Endothelial cell of umbilical vein (primary cell): ENCODE measurements at regions of chr7 and their contacts with region 1.

Region 1: GRCh38 chr7:92833024-92833765 is 3.2 kb downstream of the CDK6 start:
- DNase-seq: peak; percentile 78
- H3K4me3 ChIP-seq: peak overlapping the region; percentile 68 to 80 (median 71)
- H3K27ac ChIP-seq: peak overlapping the region; percentile 78
- H3K4me1 ChIP-seq: peaks cover 35% of the 10 kb centered on the region
- H3K27me3 ChIP-seq: peaks cover 0 to 12% of the 10 kb centered on the region in 2 experiments
- CTCF ChIP-seq: peak; percentile 79 to 92
- POLR2A ChIP-seq: no peak

Region 2: DNA sequence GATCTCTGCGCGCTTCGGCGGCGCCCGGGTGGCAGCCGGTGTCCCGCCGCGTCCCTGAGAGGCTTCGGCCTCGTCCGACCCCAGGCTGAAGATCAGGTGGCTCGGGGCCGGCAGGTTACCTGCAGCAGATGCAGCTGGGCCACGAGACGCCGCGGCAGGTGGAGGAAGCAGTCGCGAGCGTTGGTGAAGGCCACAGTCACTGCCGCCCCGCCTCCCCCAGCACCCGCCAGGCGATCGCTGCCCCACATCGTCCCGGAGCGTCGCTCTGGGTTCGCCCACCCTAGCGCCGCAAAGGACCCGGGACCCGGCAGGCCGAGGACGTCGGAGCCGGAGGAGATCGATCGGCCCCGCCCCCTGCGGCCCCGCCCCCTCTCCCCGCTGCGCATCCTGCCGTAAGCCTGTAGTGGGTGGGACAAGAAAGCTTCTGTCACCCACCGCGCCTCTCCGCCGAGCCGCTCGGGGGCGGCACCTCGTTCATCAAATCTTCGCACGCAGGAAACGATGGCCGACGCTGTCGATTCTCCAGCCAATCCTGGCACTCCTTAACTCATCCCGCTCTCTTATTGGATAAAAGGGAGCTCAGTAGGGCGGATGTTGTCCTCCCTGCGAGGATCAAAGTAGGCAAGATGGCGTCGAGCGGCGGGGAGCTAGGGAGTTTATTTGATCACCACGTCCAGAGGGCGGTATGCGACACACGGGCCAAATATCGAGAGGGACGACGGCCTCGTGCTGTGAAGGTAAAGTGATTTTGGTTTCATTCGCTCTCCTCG is 304.8 kb before region 1 on chr7 and contains the starts of genes PEX1 and RBM48:
- CTCF ChIA-PET with region 1: interaction called, 5 read pairs
- POLR2A ChIA-PET with region 1: no interaction called
- dilution Hi-C with region 1: no loop called
- intact Hi-C with region 1: loop called (anchors 2 kb)
- DNase-seq: peak; percentile 100
- H3K4me3 ChIP-seq: peak within 1 kb of the TSS; percentile 88 to 100 (median 95)
- H3K27ac ChIP-seq: peak within 1 kb of the TSS; percentile 91
- H3K4me1 ChIP-seq: peaks cover 15% of the 10 kb centered on the region
- H3K27me3 ChIP-seq: no peaks in the 10 kb centered on the region
- CTCF ChIP-seq: peak; percentile 34 to 50
- POLR2A ChIP-seq: peak; percentile 70
- total RNA-seq, gene PEX1: 10.7 and 11.7 TPM in 2 replicates
- total RNA-seq, gene RBM48: 12.0 and 13.1 TPM in 2 replicates

Region 3: DNA sequence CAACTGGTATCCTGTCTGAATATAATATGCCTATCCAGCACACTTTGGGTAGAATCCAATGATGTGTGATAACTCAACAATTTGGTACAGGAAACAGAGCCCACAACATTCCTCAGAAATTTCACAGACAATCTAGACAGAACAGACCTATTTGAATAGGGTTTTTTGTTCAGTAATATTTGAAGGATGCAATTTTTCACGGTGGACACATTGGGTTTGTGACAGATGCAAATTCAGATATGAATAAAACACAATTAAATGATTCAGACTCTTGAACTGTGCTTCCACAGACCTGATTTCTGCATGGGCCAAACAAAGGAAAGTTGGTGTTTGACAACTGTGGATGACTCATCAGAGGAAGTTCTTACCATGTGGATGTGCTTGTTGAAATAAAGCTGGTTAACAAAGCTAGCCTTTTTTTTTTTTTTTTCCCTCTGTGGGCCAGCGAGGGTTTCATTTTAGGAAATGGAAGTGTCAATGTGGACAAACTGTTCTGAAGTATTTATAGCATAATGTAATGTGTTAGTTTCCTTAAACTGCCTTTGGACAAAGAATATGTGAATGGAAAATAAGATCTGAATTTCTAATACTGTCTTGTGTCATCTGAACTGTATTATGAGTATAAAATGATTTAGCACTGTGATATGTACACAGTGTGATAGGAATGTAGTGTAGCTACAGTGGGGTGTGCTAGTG is 199.8 kb before region 1 on chr7:
- CTCF ChIA-PET with region 1: interaction called, 19 read pairs
- POLR2A ChIA-PET with region 1: interaction called, 6 read pairs
- dilution Hi-C with region 1: no loop called
- intact Hi-C with region 1: loop called (anchors 1 kb)
- DNase-seq: peak; percentile 98
- H3K4me3 ChIP-seq: peak overlapping the region in 1 of 3 experiments; percentile 31
- H3K27ac ChIP-seq: peak overlapping the region; percentile 99
- H3K4me1 ChIP-seq: peaks cover 57% of the 10 kb centered on the region
- H3K27me3 ChIP-seq: no peaks in the 10 kb centered on the region
- CTCF ChIP-seq: no peak
- POLR2A ChIP-seq: peak; percentile 27

Region 4: DNA sequence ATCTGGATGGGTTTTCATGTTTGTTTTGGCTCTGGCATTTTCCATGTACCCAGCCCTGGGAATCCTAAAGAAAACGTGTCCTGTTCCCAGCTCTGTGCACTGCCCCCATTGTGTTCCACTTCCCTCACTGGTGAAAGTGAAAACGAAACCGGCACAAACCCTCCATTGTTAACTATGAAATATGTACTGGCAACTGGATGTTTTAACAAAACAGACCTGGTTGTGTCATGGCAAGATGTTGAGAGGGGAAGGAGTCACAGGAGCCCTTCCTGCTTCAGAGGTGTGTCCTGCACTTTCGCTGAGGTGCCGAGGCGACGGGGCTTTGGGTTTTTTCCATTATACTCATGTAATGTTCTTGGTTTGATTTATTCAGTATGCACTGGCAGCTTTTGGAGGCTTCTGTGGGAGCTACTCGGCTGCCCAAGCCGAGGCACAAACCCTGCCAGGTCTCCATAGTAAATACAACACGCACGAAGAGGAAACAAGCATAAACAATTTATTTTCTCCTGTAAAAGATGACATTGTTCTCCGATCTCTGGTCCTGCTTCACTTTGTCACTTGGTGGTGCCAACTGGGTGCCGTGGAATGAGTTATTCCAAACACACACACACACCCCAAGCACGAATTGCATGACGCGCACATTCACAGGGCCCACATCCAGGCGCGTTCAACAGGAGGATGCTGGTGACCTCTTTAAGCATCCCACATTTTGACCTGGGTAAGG is 115.0 kb before region 1 on chr7:
- CTCF ChIA-PET with region 1: interaction called, 17 read pairs
- POLR2A ChIA-PET with region 1: no interaction called
- dilution Hi-C with region 1: no loop called
- intact Hi-C with region 1: loop called (anchors 1 kb)
- DNase-seq: peak; percentile 97
- H3K4me3 ChIP-seq: peak overlapping the region; percentile 28 to 72 (median 36)
- H3K27ac ChIP-seq: peak overlapping the region; percentile 95
- H3K4me1 ChIP-seq: peaks cover 28% of the 10 kb centered on the region
- H3K27me3 ChIP-seq: no peaks in the 10 kb centered on the region
- CTCF ChIP-seq: no peak
- POLR2A ChIP-seq: peak; percentile 59

Region 5: GRCh38 chr7:92781117-92781720 is 52.0 kb before region 1 on chr7:
- CTCF ChIA-PET with region 1: interaction called, 12 read pairs
- POLR2A ChIA-PET with region 1: interaction called, 6 read pairs
- dilution Hi-C with region 1: no loop called
- intact Hi-C with region 1: loop called (anchors 1 kb)
- DNase-seq: peak; percentile 89
- H3K4me3 ChIP-seq: no peak overlapping the region
- H3K27ac ChIP-seq: peak overlapping the region; percentile 31
- H3K4me1 ChIP-seq: peaks cover 20% of the 10 kb centered on the region
- H3K27me3 ChIP-seq: no peaks in the 10 kb centered on the region
- CTCF ChIP-seq: no peak
- POLR2A ChIP-seq: no peak

Region 6: DNA sequence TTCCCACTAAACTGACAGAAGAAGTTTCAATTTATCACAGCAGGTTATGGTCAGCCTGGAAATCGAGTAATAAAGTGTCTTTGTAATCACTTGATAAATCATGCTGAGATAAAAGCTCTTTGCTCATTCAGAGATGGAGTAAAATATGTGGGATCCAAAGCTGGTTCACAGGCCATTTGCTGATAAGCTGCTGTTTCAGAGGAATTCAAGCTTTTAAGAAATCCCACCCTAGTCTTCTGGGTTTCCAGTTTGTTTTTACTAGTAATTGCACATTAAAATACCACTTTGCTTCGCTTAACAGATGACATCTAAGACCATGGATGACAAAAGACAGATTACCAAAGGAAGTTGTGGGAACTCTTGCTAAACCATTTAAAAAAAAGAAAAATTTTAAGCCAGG is 40.6 kb after region 1 on chr7:
- CTCF ChIA-PET with region 1: interaction called, 4 read pairs
- POLR2A ChIA-PET with region 1: no interaction called
- dilution Hi-C with region 1: no loop called
- intact Hi-C with region 1: loop called (anchors 1 kb)
- DNase-seq: peak; percentile 36
- H3K4me3 ChIP-seq: no peak overlapping the region
- H3K27ac ChIP-seq: peak overlapping the region; percentile 65
- H3K4me1 ChIP-seq: peaks cover 18% of the 10 kb centered on the region
- H3K27me3 ChIP-seq: no peaks in the 10 kb centered on the region
- CTCF ChIP-seq: no peak
- POLR2A ChIP-seq: no peak